GM12878 (cell line): ENCODE measurements at regions of chr1 and their contacts with region 1.

Region 1: DNA sequence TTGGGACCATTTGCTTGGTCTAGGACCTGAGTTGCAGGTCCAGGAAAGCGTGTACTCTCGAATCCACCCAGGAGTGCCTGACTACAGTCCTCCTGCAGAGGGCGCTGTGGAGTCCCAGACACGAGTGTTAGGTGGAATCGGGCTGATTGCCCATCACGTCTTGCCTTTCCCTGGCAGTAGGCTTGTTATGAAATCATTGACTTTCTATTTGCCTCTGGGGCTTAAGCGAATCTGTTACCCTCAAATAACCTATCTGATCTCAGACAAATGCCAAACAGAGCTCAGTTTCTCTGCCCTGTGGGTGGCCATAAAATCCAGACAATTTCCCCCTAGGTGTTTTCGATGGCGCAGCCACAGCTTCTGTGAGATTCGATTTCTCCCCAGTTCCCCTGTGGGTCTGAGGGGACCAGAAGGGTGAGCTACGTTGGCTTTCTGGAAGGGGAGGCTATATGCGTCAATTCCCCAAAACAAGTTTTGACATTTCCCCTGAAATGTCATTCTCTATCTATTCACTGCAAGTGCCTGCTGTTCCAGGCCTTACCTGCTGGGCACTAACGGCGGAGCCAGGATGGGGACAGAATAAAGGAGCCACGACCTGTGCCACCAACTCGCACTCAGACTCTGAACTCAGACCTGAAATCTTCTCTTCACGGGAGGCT is at the start of gene IL20:
- DNase-seq: peak; percentile 31
- ATAC-seq: peak; percentile 95
- H3K4me3 ChIP-seq: no peak within 1 kb of the TSS
- H3K27ac ChIP-seq: no peak within 1 kb of the TSS
- H3K4me1 ChIP-seq: no peaks in the 10 kb centered on the region
- H3K27me3 ChIP-seq: peaks cover 0 to 2% of the 10 kb centered on the region in 2 experiments; a peak in 1 of 4 replicates
- CTCF ChIP-seq: peak; percentile 81 to 95 (median 93)
- EP300 ChIP-seq: no peak
- POLR2A ChIP-seq: no peak
- RAD21 ChIP-seq: peak; percentile 69
- polyA plus RNA-seq, gene IL20: 0.08 TPM in 1 of 2 experiments, not detected in the other

Region 2: GRCh38 chr1:206814716-206815341 is 50.3 kb before region 1 on chr1:
- CTCF ChIA-PET with region 1: interaction called, 9 read pairs
- POLR2A ChIA-PET with region 1: interaction called, 10 read pairs
- RAD21 ChIA-PET with region 1: no interaction called
- SMC1A ChIA-PET with region 1: interaction called, 5 read pairs
- in situ Hi-C with region 1: no loop called
- intact Hi-C with region 1: no loop called
- DNase-seq: no peak
- ATAC-seq: peak; percentile 42
- H3K4me3 ChIP-seq: no peak overlapping the region
- H3K27ac ChIP-seq: no peak overlapping the region; the same call in 1 of the 2 replicates
- H3K4me1 ChIP-seq: peaks cover 27% of the 10 kb centered on the region
- H3K27me3 ChIP-seq: no peaks in the 10 kb centered on the region
- CTCF ChIP-seq: no peak
- EP300 ChIP-seq: no peak
- POLR2A ChIP-seq: no peak
- RAD21 ChIP-seq: no peak

Region 3: DNA sequence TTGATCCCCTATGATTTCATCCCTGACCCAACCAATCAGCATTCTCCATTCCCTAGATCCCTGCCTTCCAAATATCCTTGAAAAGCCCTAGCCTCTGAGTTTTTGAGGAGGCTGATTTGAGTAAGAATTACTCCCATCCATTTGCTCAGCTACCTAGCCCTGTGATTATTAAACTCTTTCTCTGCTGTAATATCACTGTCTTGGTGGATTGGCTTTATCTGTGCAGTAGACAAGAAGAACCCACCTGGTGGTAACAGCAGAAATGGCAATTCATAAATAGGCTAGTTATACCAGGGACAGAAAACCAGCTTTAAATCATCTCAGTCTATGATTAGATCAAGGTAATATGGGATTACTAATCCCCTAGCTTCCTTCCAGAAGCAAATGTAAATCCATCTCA is 13.3 kb after region 1 on chr1:
- CTCF ChIA-PET with region 1: interaction called, 22 read pairs
- POLR2A ChIA-PET with region 1: no interaction called
- RAD21 ChIA-PET with region 1: interaction called, 4 read pairs
- SMC1A ChIA-PET with region 1: interaction called, 17 read pairs
- in situ Hi-C with region 1: no loop called
- intact Hi-C with region 1: no loop called
- DNase-seq: no peak
- ATAC-seq: no peak
- H3K4me3 ChIP-seq: no peak overlapping the region
- H3K27ac ChIP-seq: no peak overlapping the region
- H3K4me1 ChIP-seq: no peaks in the 10 kb centered on the region
- H3K27me3 ChIP-seq: no peaks in the 10 kb centered on the region
- CTCF ChIP-seq: peak in 2 of 3 experiments; percentile 6 to 7; a peak in 1 of 6 replicates
- EP300 ChIP-seq: no peak
- POLR2A ChIP-seq: no peak
- RAD21 ChIP-seq: no peak

Region 4: DNA sequence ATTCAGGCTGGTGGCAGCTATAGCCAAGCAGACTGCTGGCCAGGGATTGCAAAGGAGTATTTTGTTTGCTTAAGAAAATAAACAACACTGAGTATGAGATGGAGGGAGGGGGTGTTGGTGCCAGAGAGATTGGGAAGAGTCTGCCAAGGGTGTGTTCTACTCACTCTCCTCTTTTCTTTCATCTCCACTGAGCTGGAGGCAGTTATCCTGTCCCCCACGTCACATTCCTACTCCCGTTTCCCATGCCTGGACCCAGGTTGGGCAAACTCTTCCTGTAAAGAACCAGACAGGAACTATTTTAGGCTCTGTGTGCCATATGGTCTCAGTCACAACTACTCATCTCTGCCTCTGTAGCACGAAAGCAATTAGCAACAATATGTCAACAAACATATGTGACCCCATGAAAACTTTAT is 30.7 kb after region 1 on chr1:
- CTCF ChIA-PET with region 1: interaction called, 14 read pairs
- POLR2A ChIA-PET with region 1: no interaction called
- RAD21 ChIA-PET with region 1: interaction called, 3 read pairs
- SMC1A ChIA-PET with region 1: no interaction called
- in situ Hi-C with region 1: no loop called
- intact Hi-C with region 1: no loop called
- DNase-seq: no peak
- ATAC-seq: no peak
- H3K4me3 ChIP-seq: no peak overlapping the region
- H3K27ac ChIP-seq: no peak overlapping the region
- H3K4me1 ChIP-seq: no peaks in the 10 kb centered on the region
- H3K27me3 ChIP-seq: no peaks in the 10 kb centered on the region
- CTCF ChIP-seq: no peak
- EP300 ChIP-seq: no peak
- POLR2A ChIP-seq: no peak
- RAD21 ChIP-seq: no peak

Region 5: GRCh38 chr1:206930210-206930798 is 65.2 kb after region 1 on chr1:
- CTCF ChIA-PET with region 1: interaction called, 38 read pairs
- POLR2A ChIA-PET with region 1: interaction called, 3 read pairs
- RAD21 ChIA-PET with region 1: interaction called, 6 read pairs
- SMC1A ChIA-PET with region 1: interaction called, 13 read pairs
- in situ Hi-C with region 1: no loop called
- intact Hi-C with region 1: loop called (anchors 1 kb)
- DNase-seq: peak; percentile 96
- ATAC-seq: peak; percentile 86
- H3K4me3 ChIP-seq: peak overlapping the region; percentile 64
- H3K27ac ChIP-seq: peak overlapping the region; percentile 99
- H3K4me1 ChIP-seq: peaks cover 49% of the 10 kb centered on the region
- H3K27me3 ChIP-seq: no peaks in the 10 kb centered on the region
- CTCF ChIP-seq: no peak
- EP300 ChIP-seq: peak; percentile 93 to 94
- POLR2A ChIP-seq: peak; percentile 84
- RAD21 ChIP-seq: peak; percentile 12; the same call in 1 of the 2 replicates